ENCODE measurements at regions of chr19 and their contacts with region 1.

Region 1: DNA sequence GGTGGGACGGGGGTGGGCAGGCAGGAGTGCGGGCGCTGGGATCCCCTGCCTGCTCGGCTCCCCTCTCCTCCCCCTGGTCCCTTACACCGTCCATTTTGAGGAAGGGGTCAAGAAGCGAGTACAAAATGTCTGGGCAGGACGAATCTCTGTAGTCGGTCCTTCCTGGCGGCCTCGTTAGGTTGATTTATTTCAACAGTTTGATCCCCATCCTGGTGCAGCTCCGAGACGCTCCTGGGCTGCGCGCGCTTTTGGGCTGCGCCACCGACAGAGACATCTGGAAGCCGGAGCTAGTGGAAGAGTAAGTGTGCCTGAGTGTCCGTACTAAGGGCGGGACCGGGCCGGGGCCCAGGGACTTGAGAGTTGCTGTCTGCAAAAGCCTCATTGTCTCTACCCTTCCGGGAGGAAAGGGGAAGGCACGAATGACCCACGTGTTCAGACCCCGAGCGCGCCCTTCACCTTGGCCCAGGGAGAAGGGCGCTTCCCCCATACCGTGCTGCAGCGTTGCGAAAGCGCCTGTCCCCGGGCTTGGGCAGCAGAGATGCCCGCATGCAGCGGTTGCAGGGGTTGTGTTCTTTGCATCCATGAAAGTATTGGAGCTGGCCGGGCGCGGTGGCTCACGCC is 1.8 kb downstream of the ZNF114 start:
- DNase-seq: peak; percentile 67
- ATAC-seq: peak; percentile 78
- H3K4me3 ChIP-seq: peak overlapping the region; percentile 58 to 87 (median 68)
- H3K27ac ChIP-seq: peak overlapping the region; percentile 80
- H3K4me1 ChIP-seq: peaks cover 15% of the 10 kb centered on the region
- H3K27me3 ChIP-seq: no peaks in the 10 kb centered on the region
- CTCF ChIP-seq: no peak
- EP300 ChIP-seq: no peak
- POLR2A ChIP-seq: peak in 1 of 2 experiments; percentile 68; a peak in 3 of 4 replicates
- RAD21 ChIP-seq: no peak

Region 2: DNA sequence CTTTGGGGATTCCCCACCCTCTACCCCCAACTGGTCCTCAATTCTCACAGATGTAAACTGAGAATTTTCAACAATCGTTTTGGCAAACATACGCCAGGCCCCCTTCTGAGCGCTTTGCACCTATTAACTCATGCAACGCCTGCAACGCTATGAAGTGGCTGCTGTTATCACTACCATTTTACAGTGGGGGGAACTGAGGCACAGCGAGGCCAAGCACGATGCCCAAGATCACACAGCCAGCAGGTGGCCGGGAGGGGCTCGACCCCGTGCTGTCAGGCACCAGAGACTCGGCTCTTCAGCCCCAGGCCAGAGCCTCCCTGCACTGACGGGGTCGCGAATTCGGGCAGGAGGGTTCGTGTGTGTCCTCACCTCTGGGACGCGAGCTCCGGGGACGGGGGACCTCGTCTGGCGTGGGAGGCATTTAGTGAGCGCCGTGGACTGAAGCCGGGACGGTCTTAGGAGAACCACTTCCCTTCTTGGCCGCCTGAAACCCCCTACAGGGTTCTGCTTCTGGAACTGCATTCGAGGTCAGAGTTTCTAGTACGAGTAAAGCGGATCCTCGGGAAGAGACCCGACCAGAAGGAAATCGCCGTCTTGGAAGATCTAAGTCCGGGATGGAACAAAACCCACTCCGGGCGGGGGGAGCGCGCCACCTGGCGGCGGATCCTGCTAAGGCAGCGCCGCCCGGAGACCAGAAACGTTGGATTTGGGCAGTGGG is 19.3 kb after region 1 on chr19:
- CTCF ChIA-PET with region 1: interaction called, 36 read pairs
- POLR2A ChIA-PET with region 1: interaction called, 3 read pairs
- in situ Hi-C with region 1: no loop called
- intact Hi-C with region 1: loop called (anchors 1 kb)
- DNase-seq: no peak
- ATAC-seq: peak; percentile 76
- H3K4me3 ChIP-seq: peak overlapping the region; percentile 42 to 76 (median 54)
- H3K27ac ChIP-seq: no peak overlapping the region
- H3K4me1 ChIP-seq: peaks cover 20% of the 10 kb centered on the region
- H3K27me3 ChIP-seq: no peaks in the 10 kb centered on the region
- CTCF ChIP-seq: peak; percentile 90
- EP300 ChIP-seq: no peak
- POLR2A ChIP-seq: no peak
- RAD21 ChIP-seq: peak; percentile 73

Region 3: DNA sequence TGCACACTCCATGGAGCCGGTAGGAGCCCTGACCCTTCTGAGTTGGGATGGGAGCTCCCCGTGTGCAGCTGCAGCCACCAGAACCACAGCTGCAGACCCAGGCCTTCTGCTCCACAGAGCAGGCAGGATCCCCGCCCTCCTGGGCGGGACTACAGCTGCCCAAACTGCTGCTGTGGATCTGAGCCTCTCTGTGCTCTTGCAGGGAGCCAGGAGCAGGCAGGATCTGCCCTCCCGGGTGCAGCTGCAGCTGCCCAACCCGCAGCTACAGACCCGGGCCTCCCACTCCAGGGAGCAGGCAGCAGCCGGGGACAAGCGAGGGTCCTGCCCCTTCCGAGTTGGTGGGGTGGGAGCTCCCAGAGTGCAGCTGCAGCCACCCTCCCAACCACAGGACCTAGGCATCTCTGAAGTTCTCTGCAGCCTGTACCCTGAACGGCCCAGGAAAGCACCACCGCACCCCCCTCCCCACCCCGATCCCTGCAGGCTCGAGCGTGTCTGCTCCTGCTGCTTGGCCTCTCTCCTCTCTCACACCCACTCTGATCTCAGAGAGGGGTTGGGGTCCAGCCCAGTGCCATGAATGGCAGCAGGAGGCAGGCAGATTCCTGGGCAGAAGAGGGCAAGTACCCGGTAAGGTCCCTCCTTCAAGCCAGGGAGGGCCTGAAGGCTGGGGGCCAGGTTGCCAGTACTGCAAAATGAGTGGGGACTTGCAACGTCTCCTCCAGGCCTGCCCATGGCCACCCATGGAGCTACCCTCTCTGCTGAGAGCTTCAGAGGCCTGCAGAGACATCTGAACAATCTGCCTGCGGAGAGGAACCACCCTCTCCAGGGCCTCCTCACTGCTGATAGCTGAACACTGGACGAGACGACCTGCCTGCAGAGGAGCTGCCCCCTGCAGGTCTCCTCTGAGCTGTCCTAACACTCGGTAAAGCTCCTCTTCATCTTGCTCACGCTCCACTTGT is 37.3 kb after region 1 on chr19:
- CTCF ChIA-PET with region 1: interaction called, 8 read pairs
- POLR2A ChIA-PET with region 1: interaction called, 5 read pairs
- in situ Hi-C with region 1: loop called (anchors 5 kb)
- intact Hi-C with region 1: loop called (anchors 1 kb)
- DNase-seq: peak; percentile 71
- ATAC-seq: peak; percentile 98
- H3K4me3 ChIP-seq: peak overlapping the region; percentile 49 to 75 (median 57)
- H3K27ac ChIP-seq: no peak overlapping the region
- H3K4me1 ChIP-seq: peaks cover 30% of the 10 kb centered on the region
- H3K27me3 ChIP-seq: peaks cover 0 to 18% of the 10 kb centered on the region in 2 experiments; a peak in 4 of 5 replicates
- CTCF ChIP-seq: peak; percentile 87
- EP300 ChIP-seq: no peak
- POLR2A ChIP-seq: no peak
- RAD21 ChIP-seq: peak; percentile 49; the same call in 1 of the 2 replicates